Heart right ventricle (tissue), 16 donors: ENCODE measurements at regions of chr2 and their contacts with region 1.

Region 1: GRCh38 chr2:119800376-119800902 is 40.7 kb downstream of the PTPN4 start:
- DNase-seq: no peak
- ATAC-seq: no peak
- H3K4me3 ChIP-seq: no peak overlapping the region
- H3K27ac ChIP-seq: no peak overlapping the region
- H3K4me1 ChIP-seq: peaks cover 0 to 39% (median 14%) of the 10 kb centered on the region in 9 donors
- H3K27me3 ChIP-seq: no peaks in the 10 kb centered on the region
- CTCF ChIP-seq: no peak

Region 2: DNA sequence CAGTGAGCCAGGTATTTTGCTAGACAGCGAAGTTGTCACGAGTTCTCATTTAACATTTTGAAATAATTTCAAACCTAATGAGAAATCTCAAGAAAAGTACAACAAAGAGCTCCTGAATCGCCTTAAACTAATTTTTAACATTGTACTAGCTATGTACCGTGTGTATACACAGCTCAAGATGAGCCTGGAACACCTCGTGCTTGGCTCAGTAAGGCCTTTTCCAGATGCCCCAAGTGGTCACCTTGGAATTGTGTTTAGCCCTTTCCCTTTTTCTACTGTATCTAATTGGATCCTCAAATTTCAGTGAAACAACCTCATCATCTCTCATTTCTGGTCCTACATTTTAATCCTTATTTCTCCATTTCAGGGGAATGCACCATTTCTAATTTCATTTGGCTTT is 33.5 kb before region 1 on chr2:
- intact Hi-C with region 1: loop called in 1 of 10 experiments (anchors 5 kb)
- DNase-seq: no peak
- ATAC-seq: peak in 4 of 8 donors; percentile 34 to 79 (median 46)
- H3K4me3 ChIP-seq: no peak overlapping the region
- H3K27ac ChIP-seq: peak overlapping the region in 2 of 10 donors; percentile 5 to 26
- H3K4me1 ChIP-seq: peaks cover 2 to 70% (median 36%) of the 10 kb centered on the region in 9 donors
- H3K27me3 ChIP-seq: no peaks in the 10 kb centered on the region
- CTCF ChIP-seq: peak in 1 of 9 donors; percentile 15

Region 3: GRCh38 chr2:119827866-119828507 is 27.5 kb after region 1 on chr2:
- intact Hi-C with region 1: no loop called
- DNase-seq: no peak
- ATAC-seq: peak in 2 of 8 donors; percentile 26 to 68
- H3K4me3 ChIP-seq: no peak overlapping the region
- H3K27ac ChIP-seq: no peak overlapping the region
- H3K4me1 ChIP-seq: peaks cover 0 to 24% (median 7%) of the 10 kb centered on the region in 9 donors
- H3K27me3 ChIP-seq: no peaks in the 10 kb centered on the region
- CTCF ChIP-seq: no peak